ENCODE measurements at regions of chr5 and their contacts with region 1.

Region 1: DNA sequence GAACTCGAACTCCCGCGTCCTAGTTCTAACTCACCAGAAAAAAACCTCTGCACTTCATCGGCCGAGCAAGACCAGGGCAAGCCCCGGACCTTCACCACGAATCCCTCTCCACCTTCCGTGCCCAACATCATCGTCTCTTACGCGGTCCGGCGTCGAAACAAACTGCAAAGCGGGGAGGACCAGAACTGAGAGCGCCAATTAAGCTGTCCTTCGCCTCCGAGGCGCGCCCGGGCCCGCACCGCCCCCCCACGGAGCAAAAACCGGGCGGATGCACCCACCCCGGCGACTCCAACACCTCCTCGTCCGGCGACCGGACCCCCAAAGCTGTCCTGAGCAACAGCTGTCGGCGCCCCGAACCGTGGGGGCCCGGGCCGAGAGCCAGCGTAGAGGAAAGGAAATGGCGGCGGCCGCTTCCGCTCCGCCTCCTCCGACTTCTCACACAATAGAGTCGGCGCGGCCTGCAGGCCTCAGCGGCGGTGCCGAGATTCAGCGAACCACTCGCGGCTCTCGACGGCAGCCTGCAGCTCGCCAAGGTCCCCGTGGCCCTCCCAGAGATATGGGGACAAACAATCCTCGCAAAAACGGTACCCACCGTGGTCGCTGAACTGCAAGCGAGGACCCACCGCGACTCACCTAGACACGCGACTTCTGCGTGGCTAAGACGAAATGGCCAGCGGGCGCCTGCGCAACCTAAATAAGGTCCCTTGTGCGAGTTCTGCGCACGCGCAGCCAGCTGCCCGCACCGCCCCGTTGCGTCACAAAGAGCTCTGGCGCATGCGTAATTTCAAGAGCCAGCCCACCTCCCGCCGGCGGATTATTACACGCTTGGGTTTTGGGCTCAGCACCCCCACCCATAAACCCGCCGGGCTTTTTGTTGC is at the start of gene HNRNPH1:
- DNase-seq: peak; percentile 96 to 99 (median 98)
- ATAC-seq: peak; percentile 79
- H3K4me3 ChIP-seq: peak within 1 kb of the TSS; percentile 95
- H3K27ac ChIP-seq: peak within 1 kb of the TSS; percentile 99
- H3K4me1 ChIP-seq: peaks cover 20 to 35% of the 10 kb centered on the region in 2 experiments
- H3K27me3 ChIP-seq: no peaks in the 10 kb centered on the region
- CTCF ChIP-seq: no peak
- EP300 ChIP-seq: no peak
- POLR2A ChIP-seq: peak; percentile 100
- RAD21 ChIP-seq: no peak
- polyA plus RNA-seq, gene HNRNPH1: 103 to 128 TPM

Region 2: GRCh38 chr5:179550511-179551230 is 72.6 kb before region 1 on chr5 and contains the start of gene RUFY1:
- CTCF ChIA-PET with region 1: no interaction called
- POLR2A ChIA-PET with region 1: interaction called, 8 read pairs
- in situ Hi-C with region 1: no loop called
- intact Hi-C with region 1: loop called (anchors 5 kb)
- DNase-seq: peak; percentile 84 to 93 (median 91)
- ATAC-seq: peak; percentile 84
- H3K4me3 ChIP-seq: peak within 1 kb of the TSS; percentile 73
- H3K27ac ChIP-seq: peak within 1 kb of the TSS; percentile 95
- H3K4me1 ChIP-seq: peaks cover 5 to 13% of the 10 kb centered on the region in 2 experiments; a peak in 4 of 5 replicates
- H3K27me3 ChIP-seq: no peaks in the 10 kb centered on the region
- CTCF ChIP-seq: 0 out of 6 replicates have a peak, but pooled peaks of 1 of the 3 experiments have one; percentile 1
- EP300 ChIP-seq: no peak
- POLR2A ChIP-seq: peak; percentile 86
- RAD21 ChIP-seq: no peak
- polyA plus RNA-seq, gene RUFY1: 5.0 to 7.9 TPM

Region 3: GRCh38 chr5:179668391-179668790 is 45.1 kb after region 1 on chr5:
- CTCF ChIA-PET with region 1: no interaction called
- POLR2A ChIA-PET with region 1: interaction called, 21 read pairs
- in situ Hi-C with region 1: no loop called
- intact Hi-C with region 1: no loop called
- DNase-seq: peak; percentile 68 to 81 (median 74)
- ATAC-seq: peak; percentile 96
- H3K4me3 ChIP-seq: no peak overlapping the region
- H3K27ac ChIP-seq: no peak overlapping the region
- H3K4me1 ChIP-seq: peaks cover 0 to 2% of the 10 kb centered on the region in 2 experiments; a peak in 3 of 5 replicates
- H3K27me3 ChIP-seq: no peaks in the 10 kb centered on the region
- CTCF ChIP-seq: peak; percentile 100
- EP300 ChIP-seq: no peak
- POLR2A ChIP-seq: no peak
- RAD21 ChIP-seq: peak; percentile 73 to 92

Region 4: DNA sequence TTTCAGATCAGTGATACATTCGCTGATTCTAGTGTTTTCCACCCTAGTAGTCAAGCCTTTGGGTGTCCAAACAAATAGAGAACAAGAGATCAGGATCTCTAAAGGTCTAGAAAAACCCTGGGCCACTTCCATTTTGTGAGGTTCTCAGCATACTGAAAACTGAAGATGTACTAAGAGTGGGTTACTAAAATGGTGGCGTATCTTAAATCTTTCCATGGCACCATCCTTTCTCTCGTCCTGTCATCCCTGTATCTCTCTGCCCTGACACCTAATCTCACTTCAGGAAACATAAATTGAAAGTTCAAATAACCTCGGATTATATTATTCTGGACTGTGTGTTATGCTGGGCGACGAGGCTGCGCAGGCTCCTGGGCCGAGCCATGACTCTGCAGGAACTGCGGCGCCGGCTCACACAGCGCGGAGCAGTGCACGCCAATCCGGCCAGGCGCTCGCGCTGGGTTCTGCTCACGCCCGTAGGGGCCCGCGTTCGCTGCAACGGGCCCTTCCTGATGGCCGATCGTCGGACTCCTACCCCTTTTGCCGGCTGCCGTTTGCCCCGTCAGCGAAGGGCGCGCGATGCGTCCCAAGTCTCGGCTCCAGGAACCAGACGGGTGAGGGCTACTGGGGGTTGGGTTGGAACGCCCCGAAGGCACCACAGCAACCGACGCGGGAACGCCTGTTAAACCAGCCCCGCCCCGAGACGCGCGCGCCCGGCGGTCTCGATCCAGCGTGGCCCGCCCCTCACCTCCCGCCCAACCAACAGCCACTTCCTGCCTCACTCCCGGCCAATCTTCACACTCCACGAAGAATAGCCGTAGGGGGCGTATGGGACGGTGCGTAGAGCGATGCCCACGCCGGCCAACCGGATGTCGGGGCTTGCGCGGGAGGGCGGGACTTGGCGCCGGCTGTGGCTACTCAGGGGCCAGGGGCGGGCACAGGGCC is 75.0 kb after region 1 on chr5:
- CTCF ChIA-PET with region 1: no interaction called
- POLR2A ChIA-PET with region 1: interaction called, 16 read pairs
- in situ Hi-C with region 1: no loop called
- intact Hi-C with region 1: loop called (anchors 2 kb)
- DNase-seq: peak; percentile 97 to 99 (median 98)
- ATAC-seq: peak; percentile 93
- H3K4me3 ChIP-seq: peak overlapping the region; percentile 86
- H3K27ac ChIP-seq: peak overlapping the region; percentile 98
- H3K4me1 ChIP-seq: peaks cover 16 to 38% of the 10 kb centered on the region in 2 experiments
- H3K27me3 ChIP-seq: no peaks in the 10 kb centered on the region
- CTCF ChIP-seq: 0 out of 6 replicates have a peak, but pooled peaks of 1 of the 3 experiments have one; percentile 0
- EP300 ChIP-seq: peak; percentile 4; the same call in 1 of the 2 replicates
- POLR2A ChIP-seq: peak; percentile 93
- RAD21 ChIP-seq: no peak

Region 5: DNA sequence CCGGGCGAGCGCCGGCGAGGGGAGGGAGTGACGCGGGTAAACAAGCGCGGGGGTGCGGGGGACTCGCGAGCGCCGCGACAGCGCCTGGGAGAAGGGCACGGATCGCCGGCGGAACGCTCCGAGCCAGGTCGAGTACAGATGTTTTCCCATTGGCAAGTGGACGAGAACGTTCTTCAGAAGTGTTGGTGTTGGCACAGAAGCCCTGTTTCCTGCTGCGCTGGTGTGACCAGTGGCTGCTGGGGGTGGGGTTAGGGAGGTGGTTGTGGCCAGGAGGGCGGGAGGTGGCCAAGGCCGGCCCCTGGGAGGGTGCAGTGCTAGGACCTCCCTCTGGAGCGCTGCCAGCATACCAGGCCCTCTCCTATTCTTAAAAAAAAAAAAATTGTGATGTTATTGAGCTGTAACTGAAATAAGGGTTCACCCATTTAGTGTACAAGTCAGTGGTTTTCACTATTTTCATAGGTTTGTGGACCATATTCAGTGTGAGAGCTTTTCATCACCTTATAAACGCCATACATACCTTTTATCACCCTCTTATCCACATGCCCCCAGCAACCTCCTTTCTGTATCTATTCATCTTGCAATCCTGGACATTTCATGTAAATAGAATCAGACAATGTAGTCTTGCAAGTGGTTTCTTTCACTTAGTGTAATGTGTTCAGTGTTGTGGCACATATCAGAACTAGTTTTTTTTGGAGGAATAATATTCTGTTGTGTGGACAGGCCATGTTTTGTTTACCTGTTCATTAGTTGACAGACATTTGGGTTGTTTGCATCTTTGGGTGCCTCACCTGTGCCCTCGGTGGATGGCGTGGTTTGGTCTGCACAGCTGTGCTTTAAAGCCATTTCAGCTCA is 198.6 kb after region 1 on chr5:
- CTCF ChIA-PET with region 1: no interaction called
- POLR2A ChIA-PET with region 1: no interaction called
- in situ Hi-C with region 1: no loop called
- intact Hi-C with region 1: loop called (anchors 5 kb)
- DNase-seq: peak; percentile 81 to 95 (median 88)
- ATAC-seq: peak; percentile 79
- H3K4me3 ChIP-seq: peak overlapping the region; percentile 100
- H3K27ac ChIP-seq: peak overlapping the region; percentile 98
- H3K4me1 ChIP-seq: peaks cover 37 to 72% of the 10 kb centered on the region in 2 experiments
- H3K27me3 ChIP-seq: no peaks in the 10 kb centered on the region
- CTCF ChIP-seq: no peak
- EP300 ChIP-seq: no peak
- POLR2A ChIP-seq: peak; percentile 38
- RAD21 ChIP-seq: no peak; a peak in 1 of 4 replicates